ENCODE measurements at regions of chr16 and their contacts with region 1.

Region 1: GRCh38 chr16:2968738-2969544 is at the start of gene PAQR4:
- DNase-seq: peak; percentile 89
- ATAC-seq: peak; percentile 62
- H3K4me3 Mint-ChIP-seq: peak within 1 kb of the TSS; percentile 66
- H3K27ac Mint-ChIP-seq: no peak within 1 kb of the TSS
- H3K4me1 Mint-ChIP-seq: peaks cover 27% of the 10 kb centered on the region
- H3K27me3 Mint-ChIP-seq: peaks cover 33% of the 10 kb centered on the region
- CTCF ChIP-seq: no peak
- total RNA-seq, gene PAQR4: 21.1 to 32.4 TPM (median 21.5 TPM) in 3 replicates

Region 2: DNA sequence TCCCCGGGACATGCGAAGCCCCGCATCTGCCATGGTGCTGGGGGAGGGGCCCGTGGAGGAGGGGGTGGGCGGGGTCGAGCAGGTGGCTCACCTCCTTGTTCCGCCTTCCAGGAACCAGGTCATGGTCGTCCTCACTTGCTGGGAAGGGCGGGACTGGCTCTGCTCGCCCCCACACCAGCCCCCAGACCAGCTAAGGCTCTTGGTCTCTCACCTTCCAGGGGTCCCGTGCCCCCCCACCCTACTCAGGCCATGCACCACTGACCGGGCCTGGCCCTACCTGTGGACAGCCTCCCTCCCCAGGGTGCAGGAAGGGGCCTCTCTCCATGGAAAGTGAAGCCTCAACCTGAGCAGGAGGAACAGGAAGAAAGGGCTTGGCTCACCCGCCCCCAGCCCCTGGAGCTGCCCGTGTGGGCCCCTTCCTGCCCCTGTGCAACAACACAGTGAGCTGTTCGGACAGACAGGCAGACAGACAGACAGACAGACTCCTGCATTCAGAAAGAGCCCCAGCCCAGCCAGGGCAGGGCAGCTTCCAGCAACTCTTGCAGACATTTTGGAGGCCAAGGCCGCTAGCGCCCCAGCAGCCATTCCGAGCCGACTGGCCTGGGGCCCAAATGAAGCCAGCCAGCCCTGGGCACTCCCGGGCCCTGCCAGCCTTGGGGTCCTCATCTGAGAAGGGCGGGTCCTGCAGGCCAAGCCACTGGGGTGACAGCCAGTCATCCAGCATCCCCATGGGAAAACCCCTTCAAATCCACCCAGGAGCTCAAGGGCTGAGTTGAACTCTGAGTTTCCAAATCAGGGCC is 13.0 kb before region 1 on chr16:
- CTCF ChIA-PET with region 1: interaction called, 13 read pairs
- POLR2A ChIA-PET with region 1: interaction called, 8 read pairs
- DNase-seq: peak; percentile 40
- ATAC-seq: peak; percentile 64
- H3K4me3 Mint-ChIP-seq: no peak overlapping the region
- H3K27ac Mint-ChIP-seq: 0 out of 2 replicates have a peak overlapping the region, but pooled peaks have one; percentile 41
- H3K4me1 Mint-ChIP-seq: peaks cover 26% of the 10 kb centered on the region
- H3K27me3 Mint-ChIP-seq: no peaks in the 10 kb centered on the region; the same call in 1 of the 2 replicates
- CTCF ChIP-seq: no peak

Region 3: DNA sequence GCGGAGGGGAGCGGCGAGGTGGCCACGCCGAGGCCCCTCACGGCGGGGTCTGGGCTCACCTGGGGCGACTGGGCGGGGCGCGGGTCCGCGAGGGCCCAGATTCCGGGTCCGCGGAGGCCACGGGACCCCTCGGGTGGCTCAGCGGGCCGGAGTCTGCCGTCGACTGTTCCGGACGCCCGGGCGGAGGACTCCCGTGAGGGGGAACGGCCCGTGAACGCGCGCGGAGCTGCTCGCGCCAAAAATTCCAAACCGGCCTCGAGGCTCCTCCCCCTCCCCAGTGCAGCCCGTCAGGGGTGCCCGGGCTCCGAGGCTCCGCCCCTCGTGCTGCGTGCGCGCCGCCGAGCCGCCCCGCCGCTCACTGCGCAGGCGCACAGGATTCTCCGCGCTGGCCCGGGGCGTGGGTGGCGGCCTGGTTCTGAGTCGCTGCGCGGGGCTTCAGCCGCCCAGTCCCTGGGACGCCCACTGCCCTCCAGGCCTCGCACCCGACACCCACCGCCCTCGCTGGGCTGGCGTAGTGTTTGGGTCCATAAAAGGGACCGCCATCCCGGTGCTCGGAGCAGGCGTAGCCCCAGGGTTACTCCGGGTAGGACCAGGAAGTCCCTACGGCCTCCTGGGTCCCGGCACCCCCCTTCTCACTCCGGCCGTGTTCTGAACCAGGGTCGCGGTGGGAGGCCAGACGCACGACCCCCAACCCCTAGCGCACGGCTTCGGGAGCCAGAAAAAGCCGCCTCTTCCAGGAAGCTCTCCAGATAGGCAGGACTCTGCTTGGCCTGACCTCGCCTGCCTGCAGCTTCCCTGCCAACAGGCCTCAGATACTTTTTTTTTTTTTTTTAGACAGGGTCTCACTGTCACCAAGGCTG is 11.5 kb after region 1 on chr16 and contains the start of gene PKMYT1:
- CTCF ChIA-PET with region 1: interaction called, 46 read pairs
- POLR2A ChIA-PET with region 1: interaction called, 11 read pairs
- DNase-seq: peak; percentile 89
- ATAC-seq: peak; percentile 72
- H3K4me3 Mint-ChIP-seq: peak within 1 kb of the TSS; percentile 79
- H3K27ac Mint-ChIP-seq: peak within 1 kb of the TSS; percentile 91
- H3K4me1 Mint-ChIP-seq: peaks cover 24% of the 10 kb centered on the region
- H3K27me3 Mint-ChIP-seq: peaks cover 6% of the 10 kb centered on the region; the same call in 1 of the 2 replicates
- CTCF ChIP-seq: no peak
- total RNA-seq, gene PKMYT1: 102 to 120 TPM (median 113 TPM) in 3 replicates